ENCODE measurements at regions of chr18 and their contacts with region 1.

Region 1: GRCh38 chr18:14086458-14087231 is 45.6 kb downstream of the ZNF519 start:
- DNase-seq: peak in 1 of 2 experiments; percentile 40
- H3K4me3 ChIP-seq: no peak overlapping the region
- H3K4me3 Mint-ChIP-seq: no peak overlapping the region
- H3K27ac Mint-ChIP-seq: no peak overlapping the region
- H3K4me1 ChIP-seq: no peaks in the 10 kb centered on the region
- H3K4me1 Mint-ChIP-seq: peaks cover 5% of the 10 kb centered on the region
- H3K27me3 ChIP-seq: no peaks in the 10 kb centered on the region
- H3K27me3 Mint-ChIP-seq: no peaks in the 10 kb centered on the region
- CTCF ChIP-seq: peak; percentile 67 to 72

Region 2: DNA sequence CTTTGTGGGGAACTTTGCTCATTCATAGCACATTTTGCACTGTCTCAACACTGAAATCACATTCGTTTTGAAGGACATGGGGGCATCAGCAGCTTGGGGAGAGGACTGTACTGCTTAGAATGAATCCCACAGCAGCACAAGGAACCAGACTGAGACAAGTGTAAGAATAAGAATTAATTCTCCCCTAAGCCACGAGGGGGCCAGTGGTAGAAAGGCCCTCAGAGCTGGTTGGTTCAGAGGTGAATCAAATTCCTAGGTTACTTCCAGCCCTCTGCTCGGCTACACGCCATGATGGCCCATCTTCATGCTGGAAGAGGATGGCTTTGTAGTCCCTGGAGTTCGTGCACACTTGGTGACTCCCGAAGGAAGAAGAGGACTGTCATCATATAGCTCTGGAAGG is 274.7 kb before region 1 on chr18:
- CTCF ChIA-PET with region 1: no interaction called
- POLR2A ChIA-PET with region 1: no interaction called
- intact Hi-C with region 1: loop called (anchors 1 kb)
- DNase-seq: peak in 1 of 2 experiments; percentile 29
- H3K4me3 ChIP-seq: no peak overlapping the region
- H3K4me3 Mint-ChIP-seq: no peak overlapping the region
- H3K27ac Mint-ChIP-seq: no peak overlapping the region
- H3K4me1 ChIP-seq: peaks cover 10% of the 10 kb centered on the region; the same call in 1 of the 2 replicates
- H3K4me1 Mint-ChIP-seq: peaks cover 8% of the 10 kb centered on the region
- H3K27me3 ChIP-seq: no peaks in the 10 kb centered on the region
- H3K27me3 Mint-ChIP-seq: peaks cover 3% of the 10 kb centered on the region
- CTCF ChIP-seq: peak in 1 of 2 experiments; percentile 10

Region 3: DNA sequence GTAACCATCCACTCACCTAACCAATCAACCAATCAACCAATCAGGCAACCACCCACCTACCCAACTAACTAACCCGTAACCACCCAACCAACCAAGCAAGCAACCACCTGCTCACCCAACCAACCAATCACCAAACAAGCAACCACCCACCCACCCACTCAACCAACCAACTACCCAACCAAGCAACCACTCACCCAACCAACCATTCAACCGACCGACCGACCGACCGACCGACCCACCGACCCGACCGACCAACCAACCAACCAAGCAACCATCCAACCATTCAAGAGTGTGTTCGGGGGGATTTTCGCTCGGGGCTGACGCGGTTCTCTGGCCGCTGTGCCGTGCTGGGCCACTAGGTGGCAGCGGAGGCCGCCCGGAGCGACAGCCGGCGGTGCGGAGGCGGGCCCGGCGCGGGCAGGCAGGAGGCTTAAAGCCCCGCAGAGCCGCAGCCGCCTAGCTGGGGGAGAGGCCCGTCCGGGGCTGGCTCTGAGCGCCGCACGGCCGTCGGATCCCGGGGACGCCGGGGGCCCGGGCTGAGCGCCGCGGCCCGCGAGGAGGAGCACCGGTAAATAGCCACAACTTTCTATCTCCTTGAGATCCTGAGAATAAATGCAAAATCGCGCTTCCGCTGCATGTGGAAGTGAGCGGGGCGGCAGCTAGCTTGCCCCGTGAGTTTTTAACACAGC is 262.8 kb before region 1 on chr18 and contains the start of gene MC5R:
- CTCF ChIA-PET with region 1: interaction called, 3 read pairs
- POLR2A ChIA-PET with region 1: no interaction called
- intact Hi-C with region 1: loop called (anchors 1 kb)
- DNase-seq: peak in 1 of 2 experiments; percentile 79
- H3K4me3 ChIP-seq: peak within 1 kb of the TSS; percentile 23; the same call in 1 of the 2 replicates
- H3K4me3 Mint-ChIP-seq: no peak within 1 kb of the TSS
- H3K27ac Mint-ChIP-seq: no peak within 1 kb of the TSS
- H3K4me1 ChIP-seq: no peaks in the 10 kb centered on the region
- H3K4me1 Mint-ChIP-seq: no peaks in the 10 kb centered on the region
- H3K27me3 ChIP-seq: no peaks in the 10 kb centered on the region
- H3K27me3 Mint-ChIP-seq: peaks cover 19% of the 10 kb centered on the region
- CTCF ChIP-seq: peak; percentile 77 to 87
- total RNA-seq, gene MC5R: not detected in 2 replicates

Measured in Caco-2 (cell line).